Endothelial cell of umbilical vein (primary cell): ENCODE measurements at regions of chr3 and their contacts with region 1.

Region 1: DNA sequence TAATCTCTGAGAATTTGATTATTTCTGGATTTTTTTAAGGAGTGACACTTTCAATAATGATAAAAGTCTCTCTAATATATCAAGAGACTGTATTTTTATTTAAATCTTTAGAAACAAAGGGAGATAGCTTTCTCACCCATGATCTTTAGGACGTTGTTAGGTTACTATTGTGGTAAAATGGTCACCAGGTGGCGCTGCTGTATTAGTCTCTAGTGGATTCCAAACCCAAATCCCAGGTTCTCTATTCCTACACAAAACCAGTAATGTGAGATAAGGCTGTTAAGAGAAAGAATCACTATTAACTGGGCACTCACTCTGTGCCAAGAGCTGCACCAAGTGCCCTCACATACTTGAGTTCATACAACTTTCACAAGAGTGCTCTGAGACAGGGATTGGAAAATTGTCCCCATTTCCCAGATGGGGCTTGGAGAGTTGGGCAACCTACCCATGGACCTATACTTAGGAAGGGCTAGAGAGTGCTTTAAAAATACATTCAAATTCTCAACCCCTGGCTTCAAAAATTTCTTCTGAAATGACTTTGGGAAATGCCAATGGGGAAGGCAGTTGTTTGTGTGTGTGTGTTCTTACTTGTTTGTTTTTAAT is 593.4 kb upstream of the TGFBR2 start:
- DNase-seq: peak; percentile 76
- H3K4me3 ChIP-seq: no peak overlapping the region
- H3K27ac ChIP-seq: no peak overlapping the region
- H3K4me1 ChIP-seq: peaks cover 5% of the 10 kb centered on the region
- H3K27me3 ChIP-seq: no peaks in the 10 kb centered on the region
- CTCF ChIP-seq: peak; percentile 55 to 56
- POLR2A ChIP-seq: no peak

Region 2: GRCh38 chr3:28476194-28476593 is 1536.8 kb before region 1 on chr3:
- CTCF ChIA-PET with region 1: no interaction called
- POLR2A ChIA-PET with region 1: no interaction called
- dilution Hi-C with region 1: no loop called
- intact Hi-C with region 1: loop called (anchors 5 kb)
- DNase-seq: peak; percentile 41
- H3K4me3 ChIP-seq: no peak overlapping the region
- H3K27ac ChIP-seq: no peak overlapping the region
- H3K4me1 ChIP-seq: no peaks in the 10 kb centered on the region
- H3K27me3 ChIP-seq: no peaks in the 10 kb centered on the region
- CTCF ChIP-seq: peak; percentile 31 to 45
- POLR2A ChIP-seq: no peak

Region 3: DNA sequence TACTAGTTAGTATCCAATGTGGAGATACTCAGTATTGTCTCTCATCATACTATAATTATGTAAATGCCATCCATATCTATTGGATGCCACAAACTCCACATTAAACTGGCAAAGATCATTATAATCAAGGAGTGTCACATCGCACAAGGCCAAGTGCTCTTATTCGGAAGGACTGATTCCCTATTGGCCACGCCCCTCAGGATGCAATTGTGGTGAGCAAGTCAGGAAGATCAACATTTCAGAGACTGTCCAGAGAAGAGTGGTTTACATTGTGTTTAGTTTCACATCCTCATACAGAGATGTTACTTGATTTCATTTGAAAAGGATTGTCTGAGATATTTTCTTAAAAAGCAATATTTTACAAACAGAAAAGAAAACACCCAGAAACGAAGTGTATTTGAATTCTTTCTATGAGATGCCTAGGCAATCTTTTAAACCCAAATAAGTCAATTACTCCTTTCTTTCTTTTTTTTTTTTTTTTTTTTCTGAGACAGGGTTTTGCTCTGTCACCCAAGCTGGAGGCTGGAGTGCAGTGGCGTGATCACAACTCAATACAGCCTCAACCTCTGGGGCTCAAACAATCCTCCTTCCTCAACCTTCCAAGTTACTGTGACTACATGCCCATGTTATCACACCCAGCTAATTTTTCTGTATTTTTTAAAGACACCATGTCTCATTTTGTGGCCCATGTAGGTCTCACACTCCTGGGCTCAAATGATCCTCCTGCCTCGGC is 363.1 kb before region 1 on chr3:
- CTCF ChIA-PET with region 1: no interaction called
- POLR2A ChIA-PET with region 1: no interaction called
- dilution Hi-C with region 1: no loop called
- intact Hi-C with region 1: no loop called
- DNase-seq: peak; percentile 61
- H3K4me3 ChIP-seq: no peak overlapping the region
- H3K27ac ChIP-seq: no peak overlapping the region
- H3K4me1 ChIP-seq: peaks cover 10% of the 10 kb centered on the region
- H3K27me3 ChIP-seq: no peaks in the 10 kb centered on the region
- CTCF ChIP-seq: no peak
- POLR2A ChIP-seq: no peak

Region 4: GRCh38 chr3:30034246-30034991 is 21.4 kb after region 1 on chr3:
- CTCF ChIA-PET with region 1: interaction called, 10 read pairs
- POLR2A ChIA-PET with region 1: no interaction called
- dilution Hi-C with region 1: no loop called
- intact Hi-C with region 1: no loop called
- DNase-seq: no peak
- H3K4me3 ChIP-seq: no peak overlapping the region
- H3K27ac ChIP-seq: no peak overlapping the region
- H3K4me1 ChIP-seq: no peaks in the 10 kb centered on the region
- H3K27me3 ChIP-seq: peaks cover 0 to 2% of the 10 kb centered on the region in 2 experiments
- CTCF ChIP-seq: no peak
- POLR2A ChIP-seq: no peak

Region 5: DNA sequence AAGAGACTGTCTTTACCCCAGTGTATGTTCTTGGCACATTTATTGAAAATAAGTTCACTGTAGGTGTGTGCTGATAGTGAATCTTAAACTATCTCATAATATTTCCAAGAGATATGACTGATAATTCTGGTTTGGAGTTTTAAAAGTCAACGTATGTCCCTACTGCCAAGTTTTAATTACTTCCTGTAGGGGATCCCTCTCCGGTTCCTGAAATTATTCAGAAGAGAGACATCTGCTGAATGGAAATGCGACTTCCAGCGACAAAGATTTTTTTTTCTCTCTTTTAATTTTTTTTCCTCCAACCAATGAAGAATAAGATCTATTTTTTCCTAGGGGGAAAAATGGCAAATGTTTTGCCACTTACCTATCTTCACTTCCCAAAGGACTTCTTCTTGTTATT is 94.5 kb after region 1 on chr3:
- CTCF ChIA-PET with region 1: no interaction called
- POLR2A ChIA-PET with region 1: no interaction called
- dilution Hi-C with region 1: no loop called
- intact Hi-C with region 1: no loop called
- DNase-seq: no peak
- H3K4me3 ChIP-seq: no peak overlapping the region
- H3K27ac ChIP-seq: no peak overlapping the region
- H3K4me1 ChIP-seq: no peaks in the 10 kb centered on the region
- H3K27me3 ChIP-seq: peaks cover 0 to 2% of the 10 kb centered on the region in 2 experiments
- CTCF ChIP-seq: no peak
- POLR2A ChIP-seq: no peak